ENCODE measurements at regions of chr9 and their contacts with region 1.

Region 1: DNA sequence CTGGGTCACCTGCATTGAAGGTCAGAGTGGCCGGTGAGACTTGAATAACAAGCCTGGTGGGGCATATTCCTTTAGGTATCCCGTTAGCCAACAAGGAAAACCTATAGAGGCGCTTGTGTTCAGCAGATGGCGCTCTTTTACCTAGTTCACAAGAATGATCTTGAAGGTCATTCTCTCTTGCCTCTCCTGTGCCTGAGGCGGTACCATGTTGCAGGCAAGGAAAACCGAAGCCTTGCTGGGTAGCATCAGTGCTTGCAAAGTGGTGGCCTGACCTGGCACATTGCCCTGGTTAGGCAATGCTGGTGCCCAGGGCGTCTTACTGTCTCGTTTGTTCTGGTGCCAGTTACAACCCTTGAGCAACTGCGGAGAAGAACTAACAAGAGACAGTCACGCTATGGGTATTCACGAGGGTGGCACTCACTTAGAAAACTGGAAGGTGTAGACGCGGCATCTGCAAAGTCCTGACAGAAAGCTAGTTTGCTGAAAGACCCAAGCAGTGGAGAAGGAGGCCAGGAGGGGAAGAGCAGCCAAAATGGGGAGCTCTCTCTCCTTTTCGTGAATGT is 56.7 kb downstream of the AOPEP start:
- DNase-seq: peak in 4 of 5 donors; percentile 27 to 33 (median 28)
- H3K4me3 ChIP-seq: no peak overlapping the region
- H3K4me3 Mint-ChIP-seq: peak overlapping the region in 1 of 8 donors; percentile 3
- H3K27ac ChIP-seq: no peak overlapping the region
- H3K27ac Mint-ChIP-seq: no peak overlapping the region
- H3K4me1 ChIP-seq: peaks cover 4% of the 10 kb centered on the region
- H3K4me1 Mint-ChIP-seq: peaks cover 3 to 13% (median 8%) of the 10 kb centered on the region in 4 donors
- H3K27me3 ChIP-seq: no peaks in the 10 kb centered on the region
- H3K27me3 Mint-ChIP-seq: no peaks in the 10 kb centered on the region

Region 2: DNA sequence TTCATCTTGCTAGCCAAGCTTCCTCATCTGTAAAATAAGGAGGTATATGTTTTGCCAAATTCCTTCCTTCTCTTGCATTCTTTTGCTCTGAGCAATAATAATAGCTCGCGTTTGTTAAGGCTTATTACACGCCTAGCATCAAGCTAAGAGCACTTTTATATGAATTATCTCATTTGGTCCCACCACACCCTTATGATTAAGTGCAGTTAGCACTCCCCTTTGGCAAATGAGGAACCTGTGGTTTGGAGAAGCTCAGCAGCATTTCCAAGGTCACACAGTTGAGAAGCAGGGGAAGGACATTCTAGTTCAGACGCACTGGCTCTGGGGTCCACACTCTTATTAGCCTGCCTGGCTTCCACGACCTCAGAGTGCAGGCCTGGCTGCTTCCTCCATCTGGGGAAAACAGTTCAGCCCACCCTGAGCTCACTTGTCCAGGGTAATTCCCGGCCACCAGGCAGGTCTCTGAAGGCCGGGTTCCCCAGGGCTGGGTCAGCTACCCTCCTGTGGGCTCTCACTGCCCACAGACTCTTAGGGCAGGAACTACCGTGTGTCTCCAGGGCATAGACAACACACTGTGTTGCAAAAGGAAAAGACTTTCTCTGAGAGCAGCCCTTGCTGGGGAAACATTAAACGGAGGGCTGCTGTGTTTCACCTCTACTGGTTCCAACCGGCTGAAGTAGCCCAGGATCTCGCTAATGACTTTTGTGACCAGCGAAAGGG is 133.9 kb before region 1 on chr9:
- CTCF ChIA-PET with region 1: no interaction called
- POLR2A ChIA-PET with region 1: no interaction called
- intact Hi-C with region 1: no loop called
- DNase-seq: no peak
- H3K4me3 ChIP-seq: no peak overlapping the region
- H3K4me3 Mint-ChIP-seq: no peak overlapping the region
- H3K27ac ChIP-seq: no peak overlapping the region
- H3K27ac Mint-ChIP-seq: no peak overlapping the region
- H3K4me1 ChIP-seq: no peaks in the 10 kb centered on the region
- H3K4me1 Mint-ChIP-seq: no peaks in the 10 kb centered on the region
- H3K27me3 ChIP-seq: no peaks in the 10 kb centered on the region
- H3K27me3 Mint-ChIP-seq: peaks cover 0 to 1% of the 10 kb centered on the region in 2 donors

Region 3: GRCh38 chr9:94917840-94918753 is 134.9 kb after region 1 on chr9:
- CTCF ChIA-PET with region 1: interaction called, 5 read pairs
- POLR2A ChIA-PET with region 1: no interaction called
- intact Hi-C with region 1: loop called (anchors 1 kb)
- DNase-seq: peak in 2 of 5 donors; percentile 4 to 13
- H3K4me3 ChIP-seq: no peak overlapping the region
- H3K4me3 Mint-ChIP-seq: no peak overlapping the region
- H3K27ac ChIP-seq: no peak overlapping the region
- H3K27ac Mint-ChIP-seq: peak overlapping the region in 3 of 7 donors; percentile 21 to 50 (median 32)
- H3K4me1 ChIP-seq: no peaks in the 10 kb centered on the region
- H3K4me1 Mint-ChIP-seq: peaks cover 0 to 1% (median under 1%) of the 10 kb centered on the region in 4 donors
- H3K27me3 ChIP-seq: no peaks in the 10 kb centered on the region
- H3K27me3 Mint-ChIP-seq: no peaks in the 10 kb centered on the region

Measured in CD4-positive, alpha-beta memory T cell (primary cell).